GM13976 (cell line): ENCODE measurements at regions of chr21 and their contacts with region 1.

Region 1: GRCh38 chr21:37700641-37701202 is 215.5 kb downstream of the KCNJ6 start:
- DNase-seq: peak; percentile 81
- CTCF ChIP-seq: peak; percentile 30

Region 2: GRCh38 chr21:37829447-37829846 is 128.7 kb after region 1 on chr21:
- in situ Hi-C with region 1: no loop called
- DNase-seq: no peak
- CTCF ChIP-seq: no peak

Region 3: DNA sequence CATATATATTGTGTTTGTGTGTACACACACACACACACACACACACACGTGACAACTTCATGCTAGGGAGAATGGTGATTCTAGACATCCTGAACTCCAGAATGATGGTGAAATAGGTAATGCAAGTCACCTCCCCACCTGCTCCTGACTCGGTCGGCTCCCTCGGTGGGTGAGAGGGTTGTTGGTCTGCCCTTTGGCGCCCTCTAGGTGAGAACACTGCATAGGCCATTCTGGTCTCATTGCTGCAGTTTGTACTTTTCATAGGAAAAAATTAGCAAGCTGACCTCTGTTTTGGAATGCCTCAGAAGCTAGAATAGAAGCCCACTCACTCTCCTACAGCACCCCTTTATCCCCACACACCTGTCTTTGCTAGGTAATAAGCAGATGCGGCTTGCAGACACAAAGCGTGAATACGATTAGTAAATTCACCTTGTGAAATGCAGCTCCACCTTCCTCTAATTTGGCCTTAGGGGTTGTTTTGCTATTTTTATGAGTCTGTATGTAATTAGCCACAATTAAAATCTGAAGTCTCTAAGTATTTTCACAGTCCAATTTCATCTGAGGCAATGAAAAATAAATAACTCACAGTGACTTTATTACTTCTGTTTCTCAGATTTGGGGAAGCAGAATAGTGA is 426.1 kb after region 1 on chr21:
- in situ Hi-C with region 1: loop called (anchors 25 kb)
- DNase-seq: peak; percentile 39
- CTCF ChIP-seq: peak; percentile 56